ENCODE measurements at regions of chr15 and their contacts with region 1.

Region 1: GRCh38 chr15:73633111-73633990 is at the start of gene NPTN:
- DNase-seq: peak; percentile 89
- ATAC-seq: peak; percentile 90
- H3K4me3 ChIP-seq: peak within 1 kb of the TSS; percentile 77 to 88
- H3K27ac ChIP-seq: peak within 1 kb of the TSS; percentile 73
- H3K4me1 ChIP-seq: peaks cover 21 to 43% of the 10 kb centered on the region in 2 experiments
- H3K27me3 ChIP-seq: no peaks in the 10 kb centered on the region
- CTCF ChIP-seq: 0 out of 6 replicates have a peak, but pooled peaks of 1 of the 3 experiments have one; percentile 11
- POLR2A ChIP-seq: peak; percentile 96
- RAD21 ChIP-seq: no peak
- total RNA-seq, gene NPTN: 90.9 TPM

Region 2: DNA sequence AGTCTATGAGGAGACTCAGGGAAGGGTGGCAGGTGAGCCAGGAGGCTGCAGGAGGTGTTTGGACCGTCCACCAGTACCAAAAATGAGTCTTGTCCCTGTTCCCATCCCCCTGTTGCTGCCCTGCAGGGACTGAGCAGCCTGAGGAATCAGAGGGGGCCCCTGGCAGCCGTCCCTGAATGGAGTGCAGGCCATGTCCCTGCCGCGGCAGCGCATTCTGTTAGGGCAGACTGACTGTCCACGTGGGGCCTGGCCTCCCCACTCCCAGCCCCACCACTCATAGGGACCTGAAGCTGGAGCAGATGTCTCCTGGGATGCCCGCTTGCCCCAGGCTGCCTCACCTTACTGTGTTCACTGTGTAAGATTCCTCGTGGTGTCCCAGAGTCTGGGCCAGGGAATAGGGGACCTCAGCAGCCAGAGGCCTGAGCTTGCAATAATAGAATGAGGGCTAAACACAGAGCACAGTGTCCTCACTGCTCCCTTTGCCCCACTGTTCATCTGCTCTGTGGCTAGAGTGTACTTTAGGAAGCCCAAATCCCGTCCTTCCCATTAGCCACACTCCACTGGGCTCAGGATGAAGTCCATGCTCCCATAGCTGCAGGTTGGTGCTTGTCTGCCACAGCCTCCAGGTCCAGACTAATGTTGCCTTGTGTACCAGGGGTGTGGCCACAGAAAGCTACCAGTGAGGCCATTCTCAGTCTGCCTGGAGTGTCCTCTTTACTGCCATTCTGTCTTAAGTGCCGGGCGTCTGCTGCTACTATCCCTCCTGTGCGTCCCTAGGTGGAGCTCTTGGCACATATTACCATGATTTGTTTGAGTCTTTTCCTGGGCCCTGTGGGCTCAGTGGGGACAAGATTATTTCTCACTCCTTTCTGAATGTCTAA is 327.8 kb before region 1 on chr15:
- CTCF ChIA-PET with region 1: interaction called, 8 read pairs
- POLR2A ChIA-PET with region 1: no interaction called
- RAD21 ChIA-PET with region 1: no interaction called
- intact Hi-C with region 1: loop called (anchors 1 kb)
- DNase-seq: peak; percentile 61
- ATAC-seq: peak; percentile 98
- H3K4me3 ChIP-seq: no peak overlapping the region
- H3K27ac ChIP-seq: no peak overlapping the region
- H3K4me1 ChIP-seq: no peaks in the 10 kb centered on the region
- H3K27me3 ChIP-seq: no peaks in the 10 kb centered on the region
- CTCF ChIP-seq: peak; percentile 80 to 85 (median 81)
- POLR2A ChIP-seq: no peak
- RAD21 ChIP-seq: peak; percentile 85

Region 3: DNA sequence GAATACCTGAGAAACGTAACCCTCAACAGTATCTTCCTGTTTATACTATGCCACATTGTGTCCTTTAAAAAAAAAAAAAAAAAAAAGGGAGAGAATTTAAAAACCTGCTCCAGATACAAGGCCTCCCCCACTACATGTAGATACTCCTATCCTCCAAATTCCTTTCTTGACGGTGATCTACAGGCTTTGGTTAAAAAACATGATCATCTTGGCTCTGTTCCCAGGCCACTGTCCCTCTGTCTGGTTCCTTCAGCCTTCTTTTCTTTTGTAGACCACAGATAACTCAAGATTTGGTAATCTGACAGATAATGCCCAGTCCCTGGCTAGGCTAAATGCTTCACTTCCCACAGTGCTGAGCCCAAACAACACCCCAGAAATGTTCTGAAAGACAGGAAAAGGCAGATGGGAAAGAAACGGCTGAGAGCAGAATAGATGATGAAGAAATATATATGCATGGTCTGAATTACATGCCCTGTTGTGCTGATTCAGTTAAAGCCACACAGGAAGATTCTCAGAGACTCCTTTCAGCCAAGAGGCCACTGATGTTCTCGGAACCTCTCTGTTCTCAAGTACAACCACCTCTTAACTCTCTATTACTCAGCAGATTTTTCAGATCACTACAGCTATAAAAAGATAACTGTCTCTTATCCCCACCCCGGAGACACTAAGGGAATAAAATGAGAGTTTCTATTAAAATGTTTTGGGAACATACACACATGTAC is 48.5 kb before region 1 on chr15:
- CTCF ChIA-PET with region 1: no interaction called
- POLR2A ChIA-PET with region 1: no interaction called
- RAD21 ChIA-PET with region 1: no interaction called
- intact Hi-C with region 1: no loop called
- DNase-seq: no peak
- ATAC-seq: no peak
- H3K4me3 ChIP-seq: no peak overlapping the region
- H3K27ac ChIP-seq: no peak overlapping the region
- H3K4me1 ChIP-seq: no peaks in the 10 kb centered on the region
- H3K27me3 ChIP-seq: no peaks in the 10 kb centered on the region
- CTCF ChIP-seq: no peak
- POLR2A ChIP-seq: no peak
- RAD21 ChIP-seq: no peak

Region 4: GRCh38 chr15:73608941-73609340 is 24.4 kb before region 1 on chr15:
- CTCF ChIA-PET with region 1: interaction called, 19 read pairs
- POLR2A ChIA-PET with region 1: interaction called, 7 read pairs
- RAD21 ChIA-PET with region 1: no interaction called
- intact Hi-C with region 1: no loop called
- DNase-seq: no peak
- ATAC-seq: no peak
- H3K4me3 ChIP-seq: no peak overlapping the region
- H3K27ac ChIP-seq: no peak overlapping the region
- H3K4me1 ChIP-seq: no peaks in the 10 kb centered on the region
- H3K27me3 ChIP-seq: no peaks in the 10 kb centered on the region
- CTCF ChIP-seq: no peak
- POLR2A ChIP-seq: no peak
- RAD21 ChIP-seq: no peak

Region 5: DNA sequence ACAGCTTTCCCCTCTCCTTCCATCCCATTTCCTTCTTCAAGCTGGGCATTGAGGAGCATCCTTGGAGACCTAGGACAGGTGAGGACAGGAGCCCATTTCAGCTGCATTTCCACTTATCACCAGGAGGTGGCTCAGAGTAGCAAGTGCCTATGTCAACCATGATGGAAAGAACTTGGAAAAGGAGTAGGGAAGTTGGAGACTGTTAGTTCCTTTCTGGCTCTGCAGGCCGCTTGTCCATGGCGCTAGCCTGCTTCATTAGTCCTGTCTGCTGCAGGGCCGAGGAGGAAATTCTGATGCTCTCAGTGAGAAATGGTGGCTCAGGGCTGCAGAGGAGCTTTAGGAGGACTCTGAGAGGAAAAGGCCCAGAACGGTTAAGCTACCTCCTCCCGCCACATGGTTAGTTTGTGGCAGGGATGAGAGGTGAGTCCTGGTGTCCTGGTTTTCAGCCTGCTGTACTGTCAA is 43.8 kb after region 1 on chr15:
- CTCF ChIA-PET with region 1: interaction called, 24 read pairs
- POLR2A ChIA-PET with region 1: no interaction called
- RAD21 ChIA-PET with region 1: no interaction called
- intact Hi-C with region 1: no loop called
- DNase-seq: peak; percentile 51
- ATAC-seq: peak; percentile 89
- H3K4me3 ChIP-seq: no peak overlapping the region
- H3K27ac ChIP-seq: no peak overlapping the region
- H3K4me1 ChIP-seq: peaks cover 0 to 5% of the 10 kb centered on the region in 2 experiments; a peak in 1 of 4 replicates
- H3K27me3 ChIP-seq: no peaks in the 10 kb centered on the region
- CTCF ChIP-seq: peak; percentile 80 to 84 (median 81)
- POLR2A ChIP-seq: no peak
- RAD21 ChIP-seq: peak; percentile 69

Region 6: GRCh38 chr15:73697033-73697467 is 63.7 kb after region 1 on chr15:
- CTCF ChIA-PET with region 1: interaction called, 64 read pairs
- POLR2A ChIA-PET with region 1: no interaction called
- RAD21 ChIA-PET with region 1: interaction called, 4 to 7 read pairs
- intact Hi-C with region 1: loop called (anchors 1 kb)
- DNase-seq: no peak
- ATAC-seq: peak; percentile 43
- H3K4me3 ChIP-seq: no peak overlapping the region
- H3K27ac ChIP-seq: no peak overlapping the region
- H3K4me1 ChIP-seq: peaks cover 0 to 16% of the 10 kb centered on the region in 2 experiments; a peak in 2 of 4 replicates
- H3K27me3 ChIP-seq: no peaks in the 10 kb centered on the region
- CTCF ChIP-seq: no peak
- POLR2A ChIP-seq: no peak
- RAD21 ChIP-seq: no peak